ENCODE measurements at regions of chr13 and their contacts with region 1.

Region 1: GRCh38 chr13:41061075-41061913 is at the start of gene WBP4:
- DNase-seq: peak; percentile 96
- ATAC-seq: peak; percentile 85
- total RNA-seq, gene WBP4: 20.3 TPM

Region 2: GRCh38 chr13:40789275-40790133 is 271.8 kb before region 1 on chr13 and contains the start of gene SLC25A15:
- intact Hi-C with region 1: loop called (anchors 5 kb)
- DNase-seq: peak; percentile 90
- ATAC-seq: peak; percentile 96
- total RNA-seq, gene SLC25A15: 4.8 TPM

Region 3: GRCh38 chr13:40920826-40921225 is 140.5 kb before region 1 on chr13:
- intact Hi-C with region 1: loop called (anchors 1 kb)
- DNase-seq: no peak
- ATAC-seq: no peak

Region 4: GRCh38 chr13:41132512-41133152 is 71.3 kb after region 1 on chr13 and contains the start of gene KBTBD6:
- intact Hi-C with region 1: loop called (anchors 2 kb)
- DNase-seq: peak; percentile 97
- ATAC-seq: peak; percentile 99
- total RNA-seq, gene KBTBD6: 7.7 TPM

Region 5: GRCh38 chr13:41310963-41311606 is 249.8 kb after region 1 on chr13 and contains the start of gene NAA16:
- intact Hi-C with region 1: loop called (anchors 10 kb)
- DNase-seq: peak; percentile 96
- ATAC-seq: peak; percentile 95
- total RNA-seq, gene NAA16: 7.4 TPM

Measured in Right ventricle myocardium inferior (tissue), 1 donor.